ENCODE measurements at regions of chr14 and their contacts with region 1.

Region 1: DNA sequence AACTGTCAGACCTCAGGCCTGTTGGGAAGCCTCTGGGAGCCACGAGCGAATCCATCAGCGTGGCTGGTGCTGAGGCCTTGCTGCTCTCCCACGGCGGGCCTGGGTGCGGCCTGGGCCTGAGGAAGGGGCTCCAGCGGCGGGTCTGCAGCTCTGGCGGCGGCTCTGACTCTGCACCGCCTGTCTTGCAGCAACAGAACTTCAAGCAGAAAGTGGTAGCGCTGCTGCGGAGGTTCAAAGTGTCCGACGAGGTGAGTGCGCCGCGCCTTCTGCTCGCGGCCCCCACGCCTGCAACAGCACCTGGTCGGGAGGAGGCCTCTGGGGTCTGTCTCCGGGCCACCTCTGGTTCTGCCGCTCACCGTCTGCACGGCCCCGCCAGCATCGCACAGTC is 28.7 kb upstream of the TEX22 start:
- DNase-seq: no peak
- H3K4me3 Mint-ChIP-seq: no peak overlapping the region
- H3K27ac Mint-ChIP-seq: no peak overlapping the region
- H3K4me1 Mint-ChIP-seq: peaks cover 1% of the 10 kb centered on the region
- H3K27me3 Mint-ChIP-seq: no peaks in the 10 kb centered on the region

Region 2: GRCh38 chr14:105527661-105528581 is 158.3 kb after region 1 on chr14:
- intact Hi-C with region 1: loop called (anchors 2 kb)
- DNase-seq: peak; percentile 75
- H3K4me3 Mint-ChIP-seq: peak overlapping the region; percentile 71
- H3K27ac Mint-ChIP-seq: no peak overlapping the region
- H3K4me1 Mint-ChIP-seq: peaks cover 2% of the 10 kb centered on the region
- H3K27me3 Mint-ChIP-seq: peaks cover 25% of the 10 kb centered on the region

Measured in activated T-helper 2 cell treated with anti-CD3 and anti-CD28 coated beads, Interferon-gamma antibody, Interleukin-2, Interleukin-4, amounts not matched to agents 10 μg/mL and 5 μg/mL and 100 μg/mL, durations not matched to agents 14 hours and 24 hours and 36 hours (primary cell).